ENCODE measurements at regions of chr7 and their contacts with region 1.

Region 1: DNA sequence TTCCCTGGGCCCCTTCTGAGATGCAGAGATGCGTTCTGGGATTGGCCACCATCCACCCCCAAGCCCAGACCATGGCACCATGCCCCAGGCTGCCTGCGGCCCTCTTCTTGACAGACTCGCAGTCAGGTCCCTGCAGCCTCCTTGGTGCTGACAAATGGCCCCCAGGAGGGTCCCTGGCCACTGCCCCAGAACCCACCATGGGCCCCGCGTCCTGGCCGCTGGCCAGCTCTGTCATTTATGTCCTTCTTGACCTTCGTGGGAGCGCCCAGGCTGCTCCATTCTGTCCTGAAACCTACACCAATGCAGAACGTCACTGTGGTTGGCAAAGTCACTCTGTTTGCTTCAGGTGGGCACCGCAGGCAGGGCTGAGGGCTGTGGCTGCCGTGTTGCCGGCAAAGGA is 39.5 kb upstream of the SLC29A4 start:
- DNase-seq: no peak
- ATAC-seq: no peak
- H3K4me3 ChIP-seq: no peak overlapping the region
- H3K27ac ChIP-seq: no peak overlapping the region
- H3K4me1 ChIP-seq: no peaks in the 10 kb centered on the region
- H3K27me3 ChIP-seq: no peaks in the 10 kb centered on the region
- CTCF ChIP-seq: no peak

Region 2: GRCh38 chr7:5266191-5267028 is 23.1 kb after region 1 on chr7:
- CTCF ChIA-PET with region 1: no interaction called
- POLR2A ChIA-PET with region 1: no interaction called
- intact Hi-C with region 1: no loop called
- DNase-seq: no peak
- ATAC-seq: no peak
- H3K4me3 ChIP-seq: no peak overlapping the region
- H3K27ac ChIP-seq: no peak overlapping the region
- H3K4me1 ChIP-seq: no peaks in the 10 kb centered on the region
- H3K27me3 ChIP-seq: no peaks in the 10 kb centered on the region
- CTCF ChIP-seq: no peak

Region 3: GRCh38 chr7:5276611-5277010 is 33.4 kb after region 1 on chr7:
- CTCF ChIA-PET with region 1: interaction called, 17 read pairs
- POLR2A ChIA-PET with region 1: no interaction called
- intact Hi-C with region 1: no loop called
- DNase-seq: no peak
- ATAC-seq: no peak
- H3K4me3 ChIP-seq: no peak overlapping the region
- H3K27ac ChIP-seq: no peak overlapping the region
- H3K4me1 ChIP-seq: no peaks in the 10 kb centered on the region
- H3K27me3 ChIP-seq: no peaks in the 10 kb centered on the region
- CTCF ChIP-seq: no peak

Region 4: GRCh38 chr7:5526100-5526905 is 283.0 kb after region 1 on chr7:
- CTCF ChIA-PET with region 1: no interaction called
- POLR2A ChIA-PET with region 1: no interaction called
- intact Hi-C with region 1: no loop called
- DNase-seq: peak; percentile 33
- ATAC-seq: peak; percentile 6
- H3K4me3 ChIP-seq: no peak overlapping the region
- H3K27ac ChIP-seq: no peak overlapping the region
- H3K4me1 ChIP-seq: peaks cover 17% of the 10 kb centered on the region
- H3K27me3 ChIP-seq: no peaks in the 10 kb centered on the region
- CTCF ChIP-seq: no peak

Measured in PC-3 (cell line).